ENCODE measurements at regions of chr17 and their contacts with region 1.

Region 1: DNA sequence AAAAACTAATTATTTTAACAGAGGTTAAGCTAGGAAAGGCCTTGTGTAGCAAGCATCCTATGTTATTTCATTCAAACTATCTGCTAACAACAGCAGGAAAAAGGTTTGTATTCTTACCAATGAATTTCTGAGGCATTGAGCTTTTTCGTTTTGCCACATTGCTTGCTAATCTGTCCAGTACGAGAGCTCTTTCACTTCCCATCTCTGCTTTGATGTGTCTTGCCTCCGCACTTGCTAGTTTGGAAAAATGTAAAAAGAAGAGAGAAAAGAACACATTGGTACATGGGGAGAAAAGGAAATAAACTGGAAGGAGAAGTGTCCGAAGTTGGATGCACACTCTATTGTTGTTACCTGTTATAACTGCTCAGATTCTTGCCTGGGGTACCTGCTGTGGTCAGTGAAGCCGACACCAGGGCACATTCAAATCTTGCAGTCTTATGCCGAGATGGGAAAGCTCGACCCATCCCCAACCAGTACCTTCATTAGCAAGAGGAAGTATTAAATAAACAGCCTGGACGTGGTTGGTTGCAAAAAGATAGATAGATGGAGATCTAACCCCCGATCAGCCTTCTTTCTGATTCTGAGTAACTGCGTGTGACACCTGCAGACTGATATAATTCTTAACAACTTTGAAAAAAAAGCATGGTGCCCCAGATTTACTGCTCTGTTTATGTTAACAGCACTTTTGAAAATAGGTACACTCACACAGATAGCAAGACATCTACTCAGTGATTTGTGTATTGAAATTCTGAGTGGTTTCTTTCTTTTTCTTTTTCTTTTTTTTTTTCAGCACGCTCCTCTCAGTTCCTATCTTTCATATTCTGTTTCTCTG is 40.0 kb downstream of the GRB7 start:
- DNase-seq: no peak
- H3K4me3 ChIP-seq: no peak overlapping the region
- H3K27ac ChIP-seq: no peak overlapping the region
- H3K4me1 ChIP-seq: peaks cover 20% of the 10 kb centered on the region
- H3K27me3 ChIP-seq: peaks cover 24% of the 10 kb centered on the region
- CTCF ChIP-seq: no peak

Region 2: DNA sequence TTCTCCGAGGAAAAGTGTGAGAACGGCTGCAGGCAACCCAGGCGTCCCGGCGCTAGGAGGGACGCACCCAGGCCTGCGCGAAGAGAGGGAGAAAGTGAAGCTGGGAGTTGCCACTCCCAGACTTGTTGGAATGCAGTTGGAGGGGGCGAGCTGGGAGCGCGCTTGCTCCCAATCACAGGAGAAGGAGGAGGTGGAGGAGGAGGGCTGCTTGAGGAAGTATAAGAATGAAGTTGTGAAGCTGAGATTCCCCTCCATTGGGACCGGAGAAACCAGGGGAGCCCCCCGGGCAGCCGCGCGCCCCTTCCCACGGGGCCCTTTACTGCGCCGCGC is 78.0 kb before region 1 on chr17 and contains the start of gene ERBB2:
- CTCF ChIA-PET with region 1: no interaction called
- dilution Hi-C with region 1: loop called (anchors 5 kb)
- in situ Hi-C with region 1: no loop called
- intact Hi-C with region 1: no loop called
- DNase-seq: peak; percentile 74
- H3K4me3 ChIP-seq: peak within 1 kb of the TSS; percentile 84 to 91 (median 86)
- H3K27ac ChIP-seq: peak within 1 kb of the TSS; percentile 52
- H3K4me1 ChIP-seq: peaks cover 18% of the 10 kb centered on the region
- H3K27me3 ChIP-seq: no peaks in the 10 kb centered on the region
- CTCF ChIP-seq: no peak
- total RNA-seq, gene ERBB2: 54.3 to 66.5 TPM

Region 3: GRCh38 chr17:40340880-40341807 is 563.4 kb after region 1 on chr17:
- CTCF ChIA-PET with region 1: no interaction called
- dilution Hi-C with region 1: no loop called
- in situ Hi-C with region 1: no loop called
- intact Hi-C with region 1: no loop called
- DNase-seq: peak; percentile 52
- H3K4me3 ChIP-seq: peak overlapping the region in 1 of 3 experiments; percentile 18
- H3K27ac ChIP-seq: no peak overlapping the region
- H3K4me1 ChIP-seq: peaks cover 52% of the 10 kb centered on the region
- H3K27me3 ChIP-seq: no peaks in the 10 kb centered on the region
- CTCF ChIP-seq: no peak

Measured in mammary epithelial cell (primary cell).